ENCODE measurements at regions of chr4 and their contacts with region 1.

Region 1: DNA sequence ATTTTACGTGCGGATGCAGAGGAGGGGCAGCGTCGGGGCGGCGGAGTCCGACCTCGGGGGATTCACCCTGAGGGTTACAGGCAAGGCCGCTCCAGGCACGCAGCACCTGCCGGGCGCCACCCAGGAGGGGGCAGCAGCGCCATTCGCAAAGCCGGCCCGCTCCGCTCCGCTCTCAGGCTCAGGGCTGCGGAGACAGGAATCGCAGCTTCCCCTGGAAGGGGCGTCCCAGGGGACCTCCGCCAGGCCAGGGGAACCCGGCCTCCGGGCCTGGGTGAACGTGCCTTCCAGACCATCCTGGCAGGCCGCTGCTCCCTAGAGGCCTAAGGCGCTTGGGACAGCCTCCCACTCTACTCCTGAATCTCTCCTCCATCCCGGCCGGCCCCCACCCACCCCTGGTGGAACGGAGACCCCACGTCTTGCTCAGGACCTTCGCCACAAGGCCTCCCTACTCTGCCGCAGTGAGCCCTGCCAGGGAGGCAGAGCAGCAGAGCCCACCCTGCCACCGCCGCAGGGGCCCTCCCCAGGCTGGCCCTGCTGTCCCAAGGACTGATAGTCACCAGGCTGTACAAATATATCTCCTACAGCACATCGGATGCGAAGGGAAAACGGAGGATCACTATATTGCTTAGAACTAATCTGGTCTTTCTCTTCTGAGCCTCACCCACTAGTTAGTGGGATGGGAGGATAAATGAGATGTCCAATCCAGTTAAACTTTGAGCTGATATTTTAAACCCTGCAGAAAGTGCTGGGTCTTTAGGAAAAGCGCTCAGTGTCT is 115.0 kb downstream of the SMIM20 start:
- DNase-seq: peak; percentile 88
- ATAC-seq: peak; percentile 94
- H3K4me3 Mint-ChIP-seq: no peak overlapping the region
- H3K27ac Mint-ChIP-seq: no peak overlapping the region
- H3K4me1 Mint-ChIP-seq: peaks cover 12% of the 10 kb centered on the region
- H3K27me3 Mint-ChIP-seq: peaks cover 11% of the 10 kb centered on the region

Region 2: GRCh38 chr4:25986807-25987206 is 42.2 kb before region 1 on chr4:
- CTCF ChIA-PET with region 1: interaction called, 21 read pairs
- POLR2A ChIA-PET with region 1: no interaction called
- intact Hi-C with region 1: no loop called
- DNase-seq: no peak
- ATAC-seq: no peak
- H3K4me3 Mint-ChIP-seq: no peak overlapping the region
- H3K27ac Mint-ChIP-seq: no peak overlapping the region
- H3K4me1 Mint-ChIP-seq: peaks cover 4% of the 10 kb centered on the region
- H3K27me3 Mint-ChIP-seq: no peaks in the 10 kb centered on the region

Region 3: DNA sequence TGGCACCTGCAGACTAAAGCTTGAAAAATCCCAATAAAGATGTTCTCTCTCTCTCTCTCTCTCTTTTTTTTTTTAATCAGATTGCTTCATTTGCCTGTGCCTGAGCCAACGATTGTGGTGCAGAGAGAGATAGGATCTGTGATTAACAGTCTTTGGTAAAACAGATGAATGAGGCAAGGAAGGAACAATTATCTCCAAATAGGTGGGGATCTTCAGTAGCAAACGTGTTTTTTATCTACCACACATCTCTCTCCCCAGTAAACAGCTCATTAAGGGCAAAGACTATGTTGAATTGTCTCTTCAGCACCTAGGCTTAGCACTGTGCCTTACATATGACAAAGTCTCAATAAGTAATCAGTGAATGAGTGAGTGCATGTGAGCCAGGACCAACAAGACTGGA is 18.7 kb before region 1 on chr4:
- CTCF ChIA-PET with region 1: no interaction called
- POLR2A ChIA-PET with region 1: no interaction called
- intact Hi-C with region 1: no loop called
- DNase-seq: no peak
- ATAC-seq: no peak
- H3K4me3 Mint-ChIP-seq: no peak overlapping the region
- H3K27ac Mint-ChIP-seq: no peak overlapping the region
- H3K4me1 Mint-ChIP-seq: no peaks in the 10 kb centered on the region
- H3K27me3 Mint-ChIP-seq: peaks cover 40% of the 10 kb centered on the region

Region 4: GRCh38 chr4:26325191-26325590 is 296.2 kb after region 1 on chr4:
- CTCF ChIA-PET with region 1: interaction called, 9 read pairs
- POLR2A ChIA-PET with region 1: interaction called, 4 read pairs
- intact Hi-C with region 1: loop called (anchors 1 kb)
- DNase-seq: no peak
- ATAC-seq: peak; percentile 55
- H3K4me3 Mint-ChIP-seq: peak overlapping the region; percentile 41
- H3K27ac Mint-ChIP-seq: peak overlapping the region; percentile 67
- H3K4me1 Mint-ChIP-seq: peaks cover 47% of the 10 kb centered on the region
- H3K27me3 Mint-ChIP-seq: no peaks in the 10 kb centered on the region

Region 5: GRCh38 chr4:26330186-26330787 is 301.3 kb after region 1 on chr4:
- CTCF ChIA-PET with region 1: interaction called, 9 read pairs
- POLR2A ChIA-PET with region 1: interaction called, 4 read pairs
- intact Hi-C with region 1: loop called (anchors 1 kb)
- DNase-seq: no peak
- ATAC-seq: peak; percentile 80
- H3K4me3 Mint-ChIP-seq: no peak overlapping the region
- H3K27ac Mint-ChIP-seq: peak overlapping the region; percentile 49
- H3K4me1 Mint-ChIP-seq: peaks cover 48% of the 10 kb centered on the region
- H3K27me3 Mint-ChIP-seq: no peaks in the 10 kb centered on the region

Region 6: GRCh38 chr4:26420913-26421312 is 391.9 kb after region 1 on chr4:
- CTCF ChIA-PET with region 1: interaction called, 10 read pairs
- POLR2A ChIA-PET with region 1: no interaction called
- intact Hi-C with region 1: no loop called
- DNase-seq: no peak
- ATAC-seq: no peak
- H3K4me3 Mint-ChIP-seq: no peak overlapping the region
- H3K27ac Mint-ChIP-seq: no peak overlapping the region
- H3K4me1 Mint-ChIP-seq: peaks cover 1% of the 10 kb centered on the region
- H3K27me3 Mint-ChIP-seq: no peaks in the 10 kb centered on the region

Region 7: DNA sequence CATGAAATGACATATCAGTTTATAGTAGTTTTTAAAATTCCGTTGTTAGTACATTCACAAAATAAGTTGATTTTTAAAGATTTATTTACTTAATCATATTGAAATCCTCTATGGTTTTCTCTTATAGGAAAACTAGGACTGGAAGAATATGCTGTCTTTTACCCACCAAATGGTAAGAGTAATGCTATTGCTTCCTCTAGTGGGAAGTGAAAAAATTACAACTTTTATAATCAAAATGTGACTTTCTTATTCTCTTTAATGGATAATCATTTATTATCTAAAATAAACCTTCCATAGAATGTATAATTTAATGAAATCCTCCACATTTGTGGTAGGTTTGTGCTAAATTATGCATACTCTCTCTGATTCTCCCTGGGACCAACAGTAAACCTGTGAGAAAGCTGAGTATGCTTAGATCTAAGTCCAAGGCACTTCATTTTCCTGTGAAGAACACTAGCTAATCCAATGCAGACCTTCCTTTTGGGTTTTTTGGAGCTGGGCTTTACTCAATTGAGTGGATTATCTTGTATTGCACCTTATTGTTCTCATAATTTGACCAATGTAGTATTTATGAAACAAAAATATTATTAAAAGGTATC is 691.1 kb after region 1 on chr4:
- CTCF ChIA-PET with region 1: no interaction called
- POLR2A ChIA-PET with region 1: no interaction called
- intact Hi-C with region 1: loop called in 1 of 2 experiments (anchors 10 kb)
- DNase-seq: no peak
- ATAC-seq: no peak
- H3K4me3 Mint-ChIP-seq: no peak overlapping the region
- H3K27ac Mint-ChIP-seq: no peak overlapping the region
- H3K4me1 Mint-ChIP-seq: peaks cover 4% of the 10 kb centered on the region
- H3K27me3 Mint-ChIP-seq: no peaks in the 10 kb centered on the region

Region 8: GRCh38 chr4:27010334-27010940 is 981.5 kb after region 1 on chr4:
- CTCF ChIA-PET with region 1: no interaction called
- POLR2A ChIA-PET with region 1: no interaction called
- intact Hi-C with region 1: loop called in 1 of 2 experiments (anchors 2 kb)
- DNase-seq: peak; percentile 77
- ATAC-seq: peak; percentile 76
- H3K4me3 Mint-ChIP-seq: no peak overlapping the region
- H3K27ac Mint-ChIP-seq: no peak overlapping the region
- H3K4me1 Mint-ChIP-seq: peaks cover 24% of the 10 kb centered on the region
- H3K27me3 Mint-ChIP-seq: no peaks in the 10 kb centered on the region